ENCODE measurements at regions of chr6 and their contacts with region 1.

Region 1: GRCh38 chr6:26054857-26055669 is 32.2 kb upstream of the HFE start:
- DNase-seq: peak; percentile 93
- ATAC-seq: peak; percentile 65
- H3K4me3 ChIP-seq: peak overlapping the region; percentile 69 to 100 (median 94)
- H3K4me3 Mint-ChIP-seq: peak overlapping the region; percentile 96
- H3K27ac ChIP-seq: peak overlapping the region; percentile 80 to 91
- H3K27ac Mint-ChIP-seq: peak overlapping the region; percentile 97
- H3K4me1 ChIP-seq: peaks cover 12 to 16% of the 10 kb centered on the region in 2 donors
- H3K4me1 Mint-ChIP-seq: peaks cover 15% of the 10 kb centered on the region
- H3K27me3 ChIP-seq: no peaks in the 10 kb centered on the region
- H3K27me3 Mint-ChIP-seq: no peaks in the 10 kb centered on the region
- CTCF ChIP-seq: no peak

Region 2: GRCh38 chr6:25743868-25744267 is 311.2 kb before region 1 on chr6:
- CTCF ChIA-PET with region 1: no interaction called
- POLR2A ChIA-PET with region 1: no interaction called
- intact Hi-C with region 1: no loop called
- DNase-seq: no peak
- ATAC-seq: no peak
- H3K4me3 ChIP-seq: no peak overlapping the region
- H3K4me3 Mint-ChIP-seq: no peak overlapping the region
- H3K27ac ChIP-seq: no peak overlapping the region
- H3K27ac Mint-ChIP-seq: no peak overlapping the region
- H3K4me1 ChIP-seq: no peaks in the 10 kb centered on the region
- H3K4me1 Mint-ChIP-seq: peaks cover under 1% of the 10 kb centered on the region
- H3K27me3 ChIP-seq: peaks cover 0 to under 1% (median 0%) of the 10 kb centered on the region in 4 experiments
- H3K27me3 Mint-ChIP-seq: peaks cover 8% of the 10 kb centered on the region
- CTCF ChIP-seq: no peak

Region 3: DNA sequence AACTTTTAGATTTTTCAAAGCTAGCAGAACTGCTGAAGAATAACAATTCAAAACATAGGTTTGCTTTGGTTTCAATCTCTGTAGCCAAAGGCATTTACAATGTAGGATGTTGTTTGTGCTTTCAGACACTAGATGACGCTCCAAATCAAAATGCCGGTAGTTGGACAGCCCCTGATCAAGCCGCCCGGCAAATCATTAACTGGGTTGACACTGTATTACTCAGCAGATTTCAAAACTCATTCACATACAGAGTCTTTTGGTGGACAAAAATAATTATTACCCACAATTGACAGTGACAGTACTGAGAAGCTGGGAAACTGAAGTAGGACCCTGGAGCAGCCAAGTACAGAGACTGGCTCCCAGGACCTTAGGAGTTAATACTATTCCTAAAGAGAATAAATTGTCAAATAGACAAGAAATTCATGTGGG is 10.9 kb after region 1 on chr6:
- CTCF ChIA-PET with region 1: interaction called, 12 read pairs
- POLR2A ChIA-PET with region 1: no interaction called
- intact Hi-C with region 1: loop called (anchors 1 kb)
- DNase-seq: peak; percentile 83
- ATAC-seq: peak; percentile 88
- H3K4me3 ChIP-seq: no peak overlapping the region
- H3K4me3 Mint-ChIP-seq: no peak overlapping the region
- H3K27ac ChIP-seq: no peak overlapping the region
- H3K27ac Mint-ChIP-seq: no peak overlapping the region
- H3K4me1 ChIP-seq: peaks cover 0 to 4% of the 10 kb centered on the region in 2 donors
- H3K4me1 Mint-ChIP-seq: peaks cover 7% of the 10 kb centered on the region
- H3K27me3 ChIP-seq: peaks cover 0 to 2% (median 0%) of the 10 kb centered on the region in 4 experiments
- H3K27me3 Mint-ChIP-seq: no peaks in the 10 kb centered on the region
- CTCF ChIP-seq: peak; percentile 90

Region 4: GRCh38 chr6:26097268-26097875 is 42.3 kb after region 1 on chr6:
- CTCF ChIA-PET with region 1: interaction called, 605 read pairs
- POLR2A ChIA-PET with region 1: interaction called, 6 read pairs
- intact Hi-C with region 1: loop called (anchors 2 kb)
- DNase-seq: peak; percentile 80
- ATAC-seq: peak; percentile 80
- H3K4me3 ChIP-seq: no peak overlapping the region
- H3K4me3 Mint-ChIP-seq: no peak overlapping the region
- H3K27ac ChIP-seq: no peak overlapping the region
- H3K27ac Mint-ChIP-seq: no peak overlapping the region
- H3K4me1 ChIP-seq: peaks cover 6 to 9% of the 10 kb centered on the region in 2 donors
- H3K4me1 Mint-ChIP-seq: peaks cover 17% of the 10 kb centered on the region
- H3K27me3 ChIP-seq: no peaks in the 10 kb centered on the region
- H3K27me3 Mint-ChIP-seq: no peaks in the 10 kb centered on the region
- CTCF ChIP-seq: peak; percentile 89

Region 5: GRCh38 chr6:26103770-26104456 is 48.9 kb after region 1 on chr6:
- CTCF ChIA-PET with region 1: interaction called, 605 read pairs
- POLR2A ChIA-PET with region 1: interaction called, 38 read pairs
- intact Hi-C with region 1: loop called (anchors 2 kb)
- DNase-seq: peak; percentile 98
- ATAC-seq: peak; percentile 87
- H3K4me3 ChIP-seq: peak overlapping the region; percentile 52 to 81 (median 62)
- H3K4me3 Mint-ChIP-seq: peak overlapping the region; percentile 88
- H3K27ac ChIP-seq: peak overlapping the region; percentile 78 to 79
- H3K27ac Mint-ChIP-seq: peak overlapping the region; percentile 99
- H3K4me1 ChIP-seq: peaks cover 5 to 15% of the 10 kb centered on the region in 2 donors
- H3K4me1 Mint-ChIP-seq: peaks cover 15% of the 10 kb centered on the region
- H3K27me3 ChIP-seq: no peaks in the 10 kb centered on the region
- H3K27me3 Mint-ChIP-seq: no peaks in the 10 kb centered on the region
- CTCF ChIP-seq: peak; percentile 66

Region 6: GRCh38 chr6:26268659-26269402 is 213.8 kb after region 1 on chr6:
- CTCF ChIA-PET with region 1: no interaction called
- POLR2A ChIA-PET with region 1: no interaction called
- intact Hi-C with region 1: no loop called
- DNase-seq: no peak
- ATAC-seq: no peak
- H3K4me3 ChIP-seq: no peak overlapping the region
- H3K4me3 Mint-ChIP-seq: no peak overlapping the region
- H3K27ac ChIP-seq: no peak overlapping the region
- H3K27ac Mint-ChIP-seq: no peak overlapping the region
- H3K4me1 ChIP-seq: peaks cover 9 to 28% of the 10 kb centered on the region in 2 donors
- H3K4me1 Mint-ChIP-seq: peaks cover 20% of the 10 kb centered on the region
- H3K27me3 ChIP-seq: no peaks in the 10 kb centered on the region
- H3K27me3 Mint-ChIP-seq: no peaks in the 10 kb centered on the region
- CTCF ChIP-seq: no peak

Region 7: GRCh38 chr6:27565821-27566766 is 1511.0 kb after region 1 on chr6:
- CTCF ChIA-PET with region 1: no interaction called
- POLR2A ChIA-PET with region 1: no interaction called
- intact Hi-C with region 1: no loop called
- DNase-seq: no peak
- ATAC-seq: no peak
- H3K4me3 ChIP-seq: no peak overlapping the region
- H3K4me3 Mint-ChIP-seq: no peak overlapping the region
- H3K27ac ChIP-seq: no peak overlapping the region
- H3K27ac Mint-ChIP-seq: no peak overlapping the region
- H3K4me1 ChIP-seq: peaks cover 0 to 7% of the 10 kb centered on the region in 2 donors
- H3K4me1 Mint-ChIP-seq: peaks cover 5% of the 10 kb centered on the region
- H3K27me3 ChIP-seq: peaks cover 0 to 69% (median 46%) of the 10 kb centered on the region in 4 experiments
- H3K27me3 Mint-ChIP-seq: peaks cover 72% of the 10 kb centered on the region
- CTCF ChIP-seq: no peak